ENCODE measurements at regions of chr10 and their contacts with region 1.

Region 1: DNA sequence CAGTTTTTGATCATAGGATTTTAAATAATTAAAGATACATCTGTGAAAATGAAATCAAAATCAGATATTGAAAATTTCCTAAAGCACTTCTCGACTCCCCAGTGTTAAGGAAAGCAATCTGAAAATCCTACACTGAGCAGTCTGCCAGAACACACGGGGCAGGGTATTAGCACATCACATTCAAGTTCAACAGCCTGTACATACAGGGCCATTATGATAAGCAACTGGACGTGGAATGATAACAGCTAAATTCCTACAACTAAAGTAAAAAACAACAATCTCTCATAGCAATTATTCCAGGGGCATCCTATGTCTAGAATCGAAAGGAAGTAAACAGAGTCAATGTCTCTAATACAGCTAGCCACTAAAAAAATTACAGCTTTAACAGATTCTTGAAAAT is 31.7 kb downstream of the TRDMT1 start:
- DNase-seq: no peak
- ATAC-seq: no peak
- H3K4me3 ChIP-seq: no peak overlapping the region
- H3K27ac ChIP-seq: no peak overlapping the region
- H3K4me1 ChIP-seq: no peaks in the 10 kb centered on the region
- H3K27me3 ChIP-seq: no peaks in the 10 kb centered on the region
- CTCF ChIP-seq: no peak
- POLR2A ChIP-seq: no peak

Region 2: GRCh38 chr10:17138460-17139042 is 31.3 kb before region 1 on chr10:
- intact Hi-C with region 1: loop called in 1 of 10 experiments (anchors 1 kb)
- DNase-seq: no peak
- ATAC-seq: no peak
- H3K4me3 ChIP-seq: no peak overlapping the region
- H3K27ac ChIP-seq: no peak overlapping the region
- H3K4me1 ChIP-seq: no peaks in the 10 kb centered on the region
- H3K27me3 ChIP-seq: no peaks in the 10 kb centered on the region
- CTCF ChIP-seq: no peak
- POLR2A ChIP-seq: no peak